PC-3 (cell line): ENCODE measurements at regions of chr10 and their contacts with region 1.

Region 1: DNA sequence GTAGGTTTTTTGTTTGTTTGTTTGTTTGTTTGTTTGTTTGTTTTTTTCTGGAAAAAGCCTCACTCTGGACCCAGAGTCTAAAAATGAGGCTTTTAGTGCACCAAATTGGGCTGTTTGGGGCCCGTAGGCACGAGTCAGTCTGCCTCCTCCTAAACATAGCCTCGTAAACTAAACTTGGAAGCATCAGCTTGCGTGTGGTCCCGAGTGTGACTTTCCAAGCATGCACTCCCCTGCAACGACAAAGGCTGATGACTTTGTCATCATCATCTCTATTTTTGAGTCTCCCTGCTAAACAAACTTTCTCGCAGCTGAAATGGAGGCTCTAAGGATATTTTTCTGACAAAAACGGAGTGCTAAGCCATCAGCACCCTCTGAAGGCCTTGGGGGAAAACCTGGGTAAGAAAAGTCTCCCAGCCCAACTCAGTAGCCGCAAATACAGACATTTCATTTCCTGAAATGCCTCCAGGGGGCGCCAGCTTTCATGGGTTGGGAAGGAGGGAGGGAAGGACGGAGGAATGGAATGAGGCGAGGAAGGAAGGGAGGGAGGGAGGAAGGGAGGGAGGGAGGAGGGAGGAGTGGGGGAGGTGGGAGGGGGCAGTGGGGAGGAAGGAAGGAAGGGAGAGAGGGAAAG is 245.9 kb downstream of the KCNMA1 start:
- DNase-seq: peak; percentile 100
- ATAC-seq: peak; percentile 25
- H3K4me3 ChIP-seq: peak overlapping the region; percentile 10; the same call in 1 of the 2 replicates
- H3K27ac ChIP-seq: peak overlapping the region; percentile 84
- H3K4me1 ChIP-seq: peaks cover 89% of the 10 kb centered on the region
- H3K27me3 ChIP-seq: no peaks in the 10 kb centered on the region
- CTCF ChIP-seq: peak; percentile 97

Region 2: DNA sequence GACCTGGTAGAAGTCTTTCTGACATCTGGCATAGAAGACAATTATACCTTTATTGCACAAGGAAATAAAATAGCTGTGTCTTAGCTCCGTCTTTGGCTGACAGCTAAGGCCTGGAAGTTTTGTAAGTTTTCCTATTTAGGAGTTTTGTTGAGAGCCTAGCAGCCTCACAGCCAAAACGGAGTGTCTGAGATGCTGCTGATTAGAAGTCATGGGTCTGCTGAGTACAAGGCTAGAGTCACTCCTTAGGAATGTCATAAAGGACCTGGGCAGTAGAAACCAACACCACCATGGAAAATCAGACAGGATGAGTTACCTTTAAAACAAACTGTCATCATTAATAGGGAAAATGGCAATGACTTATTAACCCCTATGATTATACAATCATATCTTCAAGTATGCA is 196.6 kb before region 1 on chr10:
- CTCF ChIA-PET with region 1: interaction called, 3 read pairs
- POLR2A ChIA-PET with region 1: no interaction called
- intact Hi-C with region 1: loop called (anchors 1 kb)
- DNase-seq: peak; percentile 100
- ATAC-seq: peak; percentile 99
- H3K4me3 ChIP-seq: 0 out of 2 replicates have a peak overlapping the region, but pooled peaks have one; percentile 0
- H3K27ac ChIP-seq: peak overlapping the region; percentile 41
- H3K4me1 ChIP-seq: peaks cover 46% of the 10 kb centered on the region
- H3K27me3 ChIP-seq: no peaks in the 10 kb centered on the region
- CTCF ChIP-seq: no peak

Region 3: DNA sequence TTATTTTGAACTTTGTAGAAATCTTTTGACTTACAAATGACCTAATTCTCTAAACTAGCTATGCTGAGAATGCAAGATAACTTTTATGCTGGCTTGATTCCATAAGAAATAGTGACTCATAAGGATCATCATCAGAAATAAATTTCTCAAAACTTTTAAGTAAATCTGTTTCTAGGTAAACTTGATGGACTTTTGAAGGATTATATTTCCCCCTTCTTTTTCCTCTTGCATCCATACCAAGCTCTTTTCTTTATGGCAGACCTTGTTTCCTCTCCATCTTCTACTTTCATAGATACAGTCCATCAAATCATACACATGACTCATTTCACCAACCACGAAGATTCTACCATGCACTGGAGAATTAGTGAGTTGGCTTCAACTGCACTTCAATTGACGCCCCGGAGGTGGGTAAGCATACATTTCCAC is 90.4 kb before region 1 on chr10:
- CTCF ChIA-PET with region 1: interaction called, 3 read pairs
- POLR2A ChIA-PET with region 1: no interaction called
- intact Hi-C with region 1: loop called (anchors 1 kb)
- DNase-seq: peak; percentile 96
- ATAC-seq: 0 out of 2 replicates have a peak, but pooled peaks have one; percentile 1
- H3K4me3 ChIP-seq: no peak overlapping the region
- H3K27ac ChIP-seq: no peak overlapping the region
- H3K4me1 ChIP-seq: peaks cover 34% of the 10 kb centered on the region
- H3K27me3 ChIP-seq: no peaks in the 10 kb centered on the region
- CTCF ChIP-seq: no peak

Region 4: GRCh38 chr10:77428691-77429395 is 37.1 kb after region 1 on chr10:
- CTCF ChIA-PET with region 1: interaction called, 13 read pairs
- POLR2A ChIA-PET with region 1: no interaction called
- intact Hi-C with region 1: loop called (anchors 1 kb)
- DNase-seq: peak; percentile 92
- ATAC-seq: peak; percentile 68
- H3K4me3 ChIP-seq: no peak overlapping the region
- H3K27ac ChIP-seq: no peak overlapping the region
- H3K4me1 ChIP-seq: peaks cover 10% of the 10 kb centered on the region
- H3K27me3 ChIP-seq: no peaks in the 10 kb centered on the region
- CTCF ChIP-seq: peak; percentile 98

Region 5: DNA sequence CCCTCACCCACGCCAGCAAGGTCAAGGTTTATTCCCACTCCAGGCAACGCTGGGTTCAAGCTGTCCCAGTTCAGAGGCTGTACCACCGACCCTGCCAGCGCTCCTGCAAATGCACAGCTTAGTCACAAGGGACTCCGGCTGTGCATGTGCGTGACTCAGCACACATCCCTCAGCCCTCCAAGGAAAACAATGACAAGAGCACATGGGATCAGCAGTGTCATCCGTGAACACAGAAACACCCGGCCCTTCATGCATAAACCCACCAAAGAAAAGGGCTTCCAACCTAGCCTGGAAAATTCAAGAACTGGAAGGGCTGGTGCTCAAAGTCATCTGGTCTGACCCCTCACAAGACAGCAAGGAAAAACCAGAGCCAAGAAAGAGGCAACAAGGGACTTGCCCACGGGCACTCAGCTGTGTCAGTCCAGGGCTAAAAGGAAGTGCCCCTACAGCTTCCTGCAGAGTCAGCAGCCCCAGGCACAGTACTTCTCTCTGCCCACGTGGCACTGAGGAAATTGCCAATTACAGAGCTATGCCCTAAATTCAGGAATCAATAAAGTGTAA is 139.8 kb after region 1 on chr10:
- CTCF ChIA-PET with region 1: interaction called, 11 read pairs
- POLR2A ChIA-PET with region 1: interaction called, 5 read pairs
- intact Hi-C with region 1: no loop called
- DNase-seq: peak; percentile 99
- ATAC-seq: peak; percentile 95
- H3K4me3 ChIP-seq: peak overlapping the region; percentile 36; the same call in 1 of the 2 replicates
- H3K27ac ChIP-seq: peak overlapping the region; percentile 77
- H3K4me1 ChIP-seq: peaks cover 61% of the 10 kb centered on the region
- H3K27me3 ChIP-seq: no peaks in the 10 kb centered on the region
- CTCF ChIP-seq: no peak

Region 6: GRCh38 chr10:77710759-77711682 is 319.3 kb after region 1 on chr10:
- CTCF ChIA-PET with region 1: interaction called, 10 read pairs
- POLR2A ChIA-PET with region 1: no interaction called
- intact Hi-C with region 1: loop called (anchors 2 kb)
- DNase-seq: peak; percentile 97
- ATAC-seq: peak; percentile 98
- H3K4me3 ChIP-seq: peak overlapping the region; percentile 57
- H3K27ac ChIP-seq: no peak overlapping the region
- H3K4me1 ChIP-seq: peaks cover 10% of the 10 kb centered on the region; the same call in 1 of the 2 replicates
- H3K27me3 ChIP-seq: no peaks in the 10 kb centered on the region
- CTCF ChIP-seq: peak; percentile 100